ENCODE measurements at regions of chr5 and their contacts with region 1.

Region 1: GRCh38 chr5:133111299-133111698 is 59.5 kb downstream of the HSPA4 start:
- DNase-seq: peak; percentile 73
- ATAC-seq: peak; percentile 53
- H3K4me3 Mint-ChIP-seq: peak overlapping the region; percentile 33
- H3K27ac Mint-ChIP-seq: peak overlapping the region; percentile 68
- H3K4me1 Mint-ChIP-seq: peaks cover 45% of the 10 kb centered on the region
- H3K27me3 Mint-ChIP-seq: no peaks in the 10 kb centered on the region
- CTCF ChIP-seq: peak; percentile 77

Region 2: DNA sequence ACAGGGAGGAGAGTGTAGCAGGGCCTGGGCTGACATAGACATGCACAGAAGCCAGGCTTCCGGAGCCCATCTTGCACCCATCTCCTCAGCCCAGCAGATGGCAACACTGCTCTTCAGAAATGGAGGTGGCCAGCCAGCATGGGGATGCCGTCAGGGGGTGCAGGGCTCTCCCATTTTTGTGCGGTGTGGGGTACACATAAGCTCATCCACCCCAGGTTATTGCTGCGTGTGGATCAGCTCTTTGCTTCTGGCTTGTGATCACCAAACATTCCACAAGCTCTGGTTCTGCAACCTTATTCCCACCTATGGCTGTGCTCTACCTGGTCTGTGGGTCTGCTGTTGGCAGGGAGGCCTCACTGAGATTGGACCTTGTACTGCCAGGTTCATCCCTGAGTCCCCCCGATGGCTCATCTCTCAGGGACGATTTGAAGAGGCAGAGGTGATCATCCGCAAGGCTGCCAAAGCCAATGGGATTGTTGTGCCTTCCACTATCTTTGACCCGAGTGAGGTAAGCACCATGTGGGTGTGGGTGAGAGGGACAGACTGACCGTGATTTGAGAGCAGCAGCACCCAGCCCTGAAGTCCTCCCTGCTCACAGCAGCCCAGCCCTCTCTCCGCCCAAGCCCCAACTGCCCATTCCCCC is 724.5 kb before region 1 on chr5:
- CTCF ChIA-PET with region 1: interaction called, 3 read pairs
- POLR2A ChIA-PET with region 1: no interaction called
- intact Hi-C with region 1: loop called (anchors 10 kb)
- DNase-seq: peak; percentile 62
- ATAC-seq: peak; percentile 92
- H3K4me3 Mint-ChIP-seq: no peak overlapping the region
- H3K27ac Mint-ChIP-seq: peak overlapping the region; percentile 39
- H3K4me1 Mint-ChIP-seq: peaks cover 21% of the 10 kb centered on the region
- H3K27me3 Mint-ChIP-seq: no peaks in the 10 kb centered on the region
- CTCF ChIP-seq: no peak

Region 3: GRCh38 chr5:132718544-132719312 is 392.6 kb before region 1 on chr5:
- CTCF ChIA-PET with region 1: no interaction called
- POLR2A ChIA-PET with region 1: no interaction called
- intact Hi-C with region 1: no loop called
- DNase-seq: no peak
- ATAC-seq: no peak
- H3K4me3 Mint-ChIP-seq: no peak overlapping the region
- H3K27ac Mint-ChIP-seq: no peak overlapping the region
- H3K4me1 Mint-ChIP-seq: no peaks in the 10 kb centered on the region
- H3K27me3 Mint-ChIP-seq: no peaks in the 10 kb centered on the region
- CTCF ChIP-seq: no peak

Region 4: DNA sequence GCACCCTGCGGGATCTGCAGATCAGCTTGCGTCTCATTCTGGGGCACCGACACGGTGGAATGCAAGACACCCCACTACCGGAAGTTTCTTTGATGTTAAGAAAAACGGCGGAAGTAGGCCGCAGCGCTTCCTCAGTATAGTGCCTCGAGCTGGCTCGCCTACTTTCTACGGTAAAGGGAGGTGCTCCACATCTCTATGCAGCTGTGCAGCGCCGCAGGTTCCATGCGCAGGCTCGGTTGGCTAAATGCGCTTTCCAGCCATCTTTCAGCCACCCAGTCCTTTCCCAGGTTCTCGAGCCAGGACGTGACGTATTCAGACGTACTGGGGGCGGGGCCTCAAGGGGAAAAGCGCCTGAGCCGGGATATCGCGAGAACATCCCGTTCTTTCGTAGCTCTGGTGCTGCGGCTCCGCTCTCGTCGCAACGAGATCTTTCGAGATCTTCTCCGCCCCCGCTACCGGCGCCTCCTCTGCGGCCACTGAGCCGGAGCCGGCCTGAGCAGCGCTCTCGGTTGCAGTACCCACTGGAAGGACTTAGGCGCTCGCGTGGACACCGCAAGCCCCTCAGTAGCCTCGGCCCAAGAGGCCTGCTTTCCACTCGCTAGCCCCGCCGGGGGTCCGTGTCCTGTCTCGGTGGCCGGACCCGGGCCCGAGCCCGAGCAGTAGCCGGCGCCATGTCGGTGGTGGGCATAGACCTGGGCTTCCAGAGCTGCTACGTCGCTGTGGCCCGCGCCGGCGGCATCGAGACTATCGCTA is 59.5 kb before region 1 on chr5 and contains the start of gene HSPA4:
- CTCF ChIA-PET with region 1: no interaction called
- POLR2A ChIA-PET with region 1: interaction called, 37 read pairs
- intact Hi-C with region 1: no loop called
- DNase-seq: peak; percentile 93
- ATAC-seq: peak; percentile 85
- H3K4me3 Mint-ChIP-seq: peak within 1 kb of the TSS; percentile 96
- H3K27ac Mint-ChIP-seq: peak within 1 kb of the TSS; percentile 99
- H3K4me1 Mint-ChIP-seq: peaks cover 64% of the 10 kb centered on the region
- H3K27me3 Mint-ChIP-seq: no peaks in the 10 kb centered on the region
- CTCF ChIP-seq: no peak
- total RNA-seq, gene HSPA4: 152 and 162 TPM in 2 replicates

Region 5: GRCh38 chr5:133298447-133298846 is 187.1 kb after region 1 on chr5:
- CTCF ChIA-PET with region 1: no interaction called
- POLR2A ChIA-PET with region 1: no interaction called
- intact Hi-C with region 1: no loop called
- DNase-seq: no peak
- ATAC-seq: no peak
- H3K4me3 Mint-ChIP-seq: no peak overlapping the region
- H3K27ac Mint-ChIP-seq: no peak overlapping the region
- H3K4me1 Mint-ChIP-seq: no peaks in the 10 kb centered on the region
- H3K27me3 Mint-ChIP-seq: no peaks in the 10 kb centered on the region
- CTCF ChIP-seq: no peak

Region 6: GRCh38 chr5:133398646-133399101 is 287.4 kb after region 1 on chr5:
- CTCF ChIA-PET with region 1: no interaction called
- POLR2A ChIA-PET with region 1: no interaction called
- intact Hi-C with region 1: loop called (anchors 5 kb)
- DNase-seq: no peak
- ATAC-seq: peak; percentile 88
- H3K4me3 Mint-ChIP-seq: peak overlapping the region; percentile 59
- H3K27ac Mint-ChIP-seq: peak overlapping the region; percentile 94
- H3K4me1 Mint-ChIP-seq: peaks cover 48% of the 10 kb centered on the region
- H3K27me3 Mint-ChIP-seq: no peaks in the 10 kb centered on the region
- CTCF ChIP-seq: no peak

Region 7: DNA sequence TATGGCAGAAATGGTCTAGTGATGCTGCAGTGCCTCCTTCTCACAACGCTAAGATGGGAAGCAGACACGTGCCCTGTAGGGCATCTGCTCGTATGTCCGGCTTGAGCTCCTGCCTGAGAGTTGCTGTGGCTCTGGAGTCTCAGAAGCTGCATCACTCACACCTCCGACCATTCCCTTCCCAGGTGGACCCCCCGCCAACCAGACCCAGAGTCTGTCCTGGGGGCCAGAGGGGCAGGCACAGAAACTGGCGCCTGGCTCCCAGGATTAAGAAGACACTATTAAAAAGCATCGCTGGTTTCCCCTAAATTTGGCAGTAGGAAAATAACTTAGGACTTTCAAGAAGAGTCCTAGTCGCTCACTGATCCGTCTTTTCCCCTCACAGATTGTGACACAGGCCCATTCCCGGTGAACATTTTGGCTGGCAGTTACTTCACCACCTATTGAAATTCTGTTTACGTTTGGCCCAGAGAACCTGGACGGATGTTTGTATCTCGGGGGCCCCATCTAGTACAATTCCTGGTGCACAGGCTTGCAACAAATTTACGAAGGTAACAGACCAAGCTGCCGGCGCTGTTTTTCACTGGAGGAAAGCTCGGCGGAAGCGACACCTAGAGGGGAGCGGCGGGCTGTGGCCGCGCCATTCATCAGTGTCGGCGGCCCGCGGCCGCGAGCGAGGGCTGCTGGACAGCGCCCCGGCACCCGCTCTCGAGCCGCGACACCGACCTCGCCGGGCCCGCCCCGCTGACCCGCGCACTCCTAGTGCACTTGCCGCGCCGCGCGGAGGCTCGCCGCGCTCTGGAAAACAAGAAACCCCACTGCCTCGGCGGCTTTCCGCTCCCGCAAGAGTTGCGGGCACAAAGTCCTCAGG is 499.4 kb after region 1 on chr5:
- CTCF ChIA-PET with region 1: no interaction called
- POLR2A ChIA-PET with region 1: no interaction called
- intact Hi-C with region 1: loop called (anchors 2 kb)
- DNase-seq: peak; percentile 39
- ATAC-seq: peak; percentile 73
- H3K4me3 Mint-ChIP-seq: peak overlapping the region; percentile 73
- H3K27ac Mint-ChIP-seq: no peak overlapping the region
- H3K4me1 Mint-ChIP-seq: peaks cover 17% of the 10 kb centered on the region
- H3K27me3 Mint-ChIP-seq: peaks cover 53% of the 10 kb centered on the region
- CTCF ChIP-seq: no peak

Region 8: DNA sequence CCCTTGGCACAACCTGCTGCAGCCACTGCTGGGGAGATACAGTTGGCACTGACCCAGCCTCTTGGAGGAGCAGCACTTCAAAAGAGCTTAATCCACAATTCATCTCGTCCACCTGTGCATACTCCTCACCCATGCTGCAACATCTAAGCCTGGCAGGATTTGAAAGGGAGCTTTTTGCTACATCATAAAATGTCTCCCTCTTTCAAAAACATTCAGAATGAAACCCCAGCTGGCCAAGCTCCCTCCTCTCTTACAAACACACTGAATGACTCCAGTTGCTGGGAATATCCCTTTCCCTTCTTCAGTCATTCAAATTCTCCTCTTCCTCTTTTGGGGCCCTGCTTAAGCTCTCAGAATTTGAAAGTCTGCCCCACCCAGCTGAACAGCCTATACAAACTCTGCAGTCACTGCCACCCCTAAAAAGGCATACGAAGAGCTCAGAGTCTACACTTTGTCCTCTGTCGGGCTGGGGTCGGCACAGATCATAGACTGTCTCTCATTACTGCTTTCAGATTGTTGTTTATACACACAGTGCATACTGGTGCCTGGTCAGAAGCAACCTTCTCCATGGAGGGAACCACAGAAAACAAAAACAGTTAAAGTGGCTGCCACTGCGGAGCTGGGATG is 866.0 kb after region 1 on chr5:
- CTCF ChIA-PET with region 1: interaction called, 5 read pairs
- POLR2A ChIA-PET with region 1: interaction called, 4 read pairs
- intact Hi-C with region 1: loop called (anchors 1 kb)
- DNase-seq: no peak
- ATAC-seq: peak; percentile 54
- H3K4me3 Mint-ChIP-seq: no peak overlapping the region
- H3K27ac Mint-ChIP-seq: peak overlapping the region; percentile 68
- H3K4me1 Mint-ChIP-seq: peaks cover 29% of the 10 kb centered on the region
- H3K27me3 Mint-ChIP-seq: no peaks in the 10 kb centered on the region
- CTCF ChIP-seq: no peak